PC-9 (cell line): ENCODE measurements at regions of chr11 and their contacts with region 1.

Region 1: GRCh38 chr11:46295312-46296058 is 18.0 kb downstream of the CREB3L1 start:
- DNase-seq: peak; percentile 68 to 82
- H3K4me3 ChIP-seq: peak overlapping the region; percentile 73
- H3K27ac ChIP-seq: peak overlapping the region; percentile 70
- H3K4me1 ChIP-seq: peaks cover 68% of the 10 kb centered on the region
- H3K27me3 ChIP-seq: no peaks in the 10 kb centered on the region
- CTCF ChIP-seq: no peak

Region 2: GRCh38 chr11:46278387-46279125 is 16.9 kb before region 1 on chr11:
- CTCF ChIA-PET with region 1: interaction called, 38 read pairs
- POLR2A ChIA-PET with region 1: no interaction called
- intact Hi-C with region 1: loop called (anchors 2 kb)
- DNase-seq: no peak
- H3K4me3 ChIP-seq: no peak overlapping the region
- H3K27ac ChIP-seq: no peak overlapping the region
- H3K4me1 ChIP-seq: peaks cover 22% of the 10 kb centered on the region
- H3K27me3 ChIP-seq: 0 out of 2 replicates have a peak, but pooled peaks cover 3% of the 10 kb centered on the region
- CTCF ChIP-seq: no peak

Region 3: GRCh38 chr11:46338988-46339666 is 43.6 kb after region 1 on chr11:
- CTCF ChIA-PET with region 1: no interaction called
- POLR2A ChIA-PET with region 1: interaction called, 16 read pairs
- intact Hi-C with region 1: no loop called
- DNase-seq: peak; percentile 64 to 81
- H3K4me3 ChIP-seq: peak overlapping the region; percentile 49
- H3K27ac ChIP-seq: peak overlapping the region; percentile 79
- H3K4me1 ChIP-seq: peaks cover 77% of the 10 kb centered on the region
- H3K27me3 ChIP-seq: no peaks in the 10 kb centered on the region
- CTCF ChIP-seq: 0 out of 2 replicates have a peak, but pooled peaks have one; percentile 25